ENCODE measurements at regions of chr5 and their contacts with region 1.

Region 1: DNA sequence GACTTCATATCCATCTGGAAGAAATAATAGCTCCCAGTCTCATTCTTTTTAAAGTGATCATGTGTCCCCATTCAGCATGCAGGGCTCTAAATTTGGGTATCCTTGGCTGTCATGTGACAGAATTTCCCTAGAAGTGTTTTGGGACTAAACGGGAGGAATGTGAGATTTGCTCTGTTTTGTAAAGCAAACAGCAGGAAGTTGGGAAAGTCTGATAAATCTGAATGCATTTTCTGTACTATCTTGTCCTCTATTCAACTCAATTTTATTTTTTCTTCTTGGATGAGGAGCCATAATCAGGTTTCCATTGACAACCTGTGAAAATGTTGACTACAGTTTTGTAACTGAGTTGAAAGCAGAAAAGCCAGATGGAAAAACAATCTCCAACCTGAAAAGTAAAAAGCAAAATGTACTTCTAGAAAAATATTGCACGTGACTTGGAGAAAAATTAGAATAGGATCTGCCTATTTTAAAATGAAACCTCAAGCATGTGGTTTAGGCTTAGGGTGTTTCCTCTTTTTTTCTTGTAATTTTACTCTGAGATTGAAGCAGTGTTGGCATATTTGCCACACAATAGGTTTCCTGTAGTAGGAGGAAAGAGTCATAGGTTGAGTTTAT is 76.2 kb upstream of the IL6ST start:
- DNase-seq: peak in 3 of 10 donors; percentile 41 to 67 (median 64)
- ATAC-seq: peak; percentile 90 to 93
- H3K4me3 Mint-ChIP-seq: peak overlapping the region; percentile 59 to 91 (median 76)
- H3K27ac Mint-ChIP-seq: peak overlapping the region; percentile 87 to 99 (median 94)
- H3K4me1 Mint-ChIP-seq: peaks cover 37 to 79% (median 67%) of the 10 kb centered on the region in 4 donors
- H3K27me3 Mint-ChIP-seq: no peaks in the 10 kb centered on the region

Region 2: GRCh38 chr5:56056875-56057274 is 14.1 kb before region 1 on chr5:
- POLR2A ChIA-PET with region 1: interaction called, 21 read pairs
- DNase-seq: no peak
- ATAC-seq: no peak
- H3K4me3 Mint-ChIP-seq: peak overlapping the region in 8 of 10 donors; percentile 4 to 72 (median 56)
- H3K27ac Mint-ChIP-seq: peak overlapping the region; percentile 72 to 96 (median 91)
- H3K4me1 Mint-ChIP-seq: peaks cover 40 to 88% (median 68%) of the 10 kb centered on the region in 4 donors
- H3K27me3 Mint-ChIP-seq: no peaks in the 10 kb centered on the region

Region 3: GRCh38 chr5:56279979-56280378 is 209.0 kb after region 1 on chr5:
- POLR2A ChIA-PET with region 1: no interaction called
- DNase-seq: no peak
- ATAC-seq: no peak
- H3K4me3 Mint-ChIP-seq: no peak overlapping the region
- H3K27ac Mint-ChIP-seq: no peak overlapping the region
- H3K4me1 Mint-ChIP-seq: no peaks in the 10 kb centered on the region
- H3K27me3 Mint-ChIP-seq: no peaks in the 10 kb centered on the region